RWPE1 (cell line): ENCODE measurements at regions of chr18 and their contacts with region 1.

Region 1: GRCh38 chr18:49432602-49433001 is 27.8 kb downstream of the DYM start:
- DNase-seq: no peak
- H3K27ac ChIP-seq: no peak overlapping the region
- CTCF ChIP-seq: no peak

Region 2: GRCh38 chr18:48951448-48952286 is 480.9 kb before region 1 on chr18:
- CTCF ChIA-PET with region 1: no interaction called
- POLR2A ChIA-PET with region 1: interaction called, 10 read pairs
- DNase-seq: peak; percentile 61
- H3K27ac ChIP-seq: peak overlapping the region; percentile 99
- CTCF ChIP-seq: no peak